Activated CD4-positive, alpha-beta T cell treated with anti-CD3 and anti-CD28 coated beads for 36 hours (primary cell): ENCODE measurements at regions of chr12 and their contacts with region 1.

Region 1: DNA sequence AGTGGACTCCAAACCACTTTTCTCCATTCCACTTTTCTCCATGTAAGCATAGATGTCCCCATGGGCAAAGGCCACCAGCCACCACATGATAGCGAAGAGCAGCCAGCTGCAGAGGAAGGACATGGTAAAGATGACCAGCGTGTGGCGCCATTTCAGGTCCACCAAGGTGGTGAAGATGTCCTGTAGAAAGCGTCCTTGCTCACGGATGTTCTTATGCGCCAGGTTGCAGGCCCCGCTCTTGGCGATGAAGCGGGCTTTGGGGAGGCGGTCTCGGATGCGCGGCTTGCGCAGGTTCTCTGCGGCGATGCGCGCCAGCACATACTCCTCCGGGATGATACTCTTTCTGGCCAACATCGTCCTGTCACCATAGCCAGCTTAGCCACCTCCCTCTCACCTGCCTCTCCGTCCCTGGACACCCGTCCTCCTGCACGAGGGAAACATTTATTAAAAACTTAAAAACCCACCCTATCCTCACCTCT is 1.2 kb downstream of the KCNJ8 start:
- DNase-seq: peak; percentile 37
- ATAC-seq: peak; percentile 39
- H3K4me3 Mint-ChIP-seq: no peak overlapping the region
- H3K27ac Mint-ChIP-seq: no peak overlapping the region
- H3K4me1 Mint-ChIP-seq: peaks cover 6% of the 10 kb centered on the region
- H3K27me3 Mint-ChIP-seq: peaks cover 37% of the 10 kb centered on the region

Region 2: DNA sequence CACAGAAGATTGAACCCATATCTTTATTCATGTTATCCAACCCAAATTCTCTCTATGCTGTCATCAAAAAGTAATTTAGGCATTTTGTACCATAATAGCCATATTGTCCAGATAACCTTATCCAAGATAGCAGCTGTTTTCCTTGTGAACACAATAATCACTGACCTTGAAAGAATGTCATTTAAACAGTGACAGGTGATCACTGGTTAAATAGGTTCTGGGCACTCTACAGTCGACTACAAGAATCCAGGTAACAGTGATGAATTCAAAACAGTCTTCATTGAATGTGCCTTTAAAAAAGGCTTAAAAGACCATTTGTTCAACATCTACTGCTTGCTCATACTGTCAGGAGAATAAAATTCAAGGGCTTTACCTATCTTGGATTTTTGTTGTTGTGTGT is 251.8 kb before region 1 on chr12:
- CTCF ChIA-PET with region 1: no interaction called
- POLR2A ChIA-PET with region 1: no interaction called
- intact Hi-C with region 1: no loop called
- DNase-seq: no peak
- ATAC-seq: no peak
- H3K4me3 Mint-ChIP-seq: no peak overlapping the region
- H3K27ac Mint-ChIP-seq: no peak overlapping the region
- H3K4me1 Mint-ChIP-seq: no peaks in the 10 kb centered on the region
- H3K27me3 Mint-ChIP-seq: peaks cover 7% of the 10 kb centered on the region

Region 3: GRCh38 chr12:21939435-21939834 is 166.1 kb after region 1 on chr12:
- CTCF ChIA-PET with region 1: no interaction called
- POLR2A ChIA-PET with region 1: no interaction called
- intact Hi-C with region 1: loop called in 1 of 2 experiments (anchors 5 kb)
- DNase-seq: no peak
- ATAC-seq: no peak
- H3K4me3 Mint-ChIP-seq: no peak overlapping the region
- H3K27ac Mint-ChIP-seq: no peak overlapping the region
- H3K4me1 Mint-ChIP-seq: peaks cover 16% of the 10 kb centered on the region
- H3K27me3 Mint-ChIP-seq: peaks cover 54% of the 10 kb centered on the region

Region 4: GRCh38 chr12:21962236-21962635 is 188.9 kb after region 1 on chr12:
- CTCF ChIA-PET with region 1: no interaction called
- POLR2A ChIA-PET with region 1: no interaction called
- intact Hi-C with region 1: no loop called
- DNase-seq: no peak
- ATAC-seq: no peak
- H3K4me3 Mint-ChIP-seq: no peak overlapping the region
- H3K27ac Mint-ChIP-seq: no peak overlapping the region
- H3K4me1 Mint-ChIP-seq: no peaks in the 10 kb centered on the region
- H3K27me3 Mint-ChIP-seq: peaks cover 3% of the 10 kb centered on the region

Region 5: DNA sequence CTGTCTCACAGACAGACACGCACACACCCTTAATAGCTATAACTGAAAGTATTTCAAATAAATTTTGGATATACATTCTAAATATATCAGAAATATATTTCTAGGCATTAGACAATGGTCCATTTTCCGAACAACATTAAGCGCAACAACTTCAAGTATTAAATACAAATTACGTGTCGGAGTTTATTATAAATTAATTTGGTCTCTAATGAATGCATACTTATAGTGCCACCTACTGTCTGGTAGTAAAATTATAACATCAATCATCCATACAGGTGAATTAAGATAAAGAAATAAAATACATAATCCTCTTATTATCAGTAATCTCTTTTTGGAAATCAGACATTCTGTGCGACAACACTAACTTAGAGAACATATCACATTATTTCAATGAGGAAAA is 245.6 kb after region 1 on chr12:
- CTCF ChIA-PET with region 1: interaction called, 3 read pairs
- POLR2A ChIA-PET with region 1: no interaction called
- intact Hi-C with region 1: loop called in 1 of 2 experiments (anchors 5 kb)
- DNase-seq: no peak
- ATAC-seq: no peak
- H3K4me3 Mint-ChIP-seq: no peak overlapping the region
- H3K27ac Mint-ChIP-seq: no peak overlapping the region
- H3K4me1 Mint-ChIP-seq: no peaks in the 10 kb centered on the region
- H3K27me3 Mint-ChIP-seq: peaks cover 6% of the 10 kb centered on the region